Activated CD4-positive, alpha-beta T cell treated with anti-CD3 and anti-CD28 coated beads, Interleukin-2, amount 10 ng/mL, durations not matched to agents 24 days and 14 days (primary cell): ENCODE measurements at regions of chr21 and their contacts with region 1.

Region 1: DNA sequence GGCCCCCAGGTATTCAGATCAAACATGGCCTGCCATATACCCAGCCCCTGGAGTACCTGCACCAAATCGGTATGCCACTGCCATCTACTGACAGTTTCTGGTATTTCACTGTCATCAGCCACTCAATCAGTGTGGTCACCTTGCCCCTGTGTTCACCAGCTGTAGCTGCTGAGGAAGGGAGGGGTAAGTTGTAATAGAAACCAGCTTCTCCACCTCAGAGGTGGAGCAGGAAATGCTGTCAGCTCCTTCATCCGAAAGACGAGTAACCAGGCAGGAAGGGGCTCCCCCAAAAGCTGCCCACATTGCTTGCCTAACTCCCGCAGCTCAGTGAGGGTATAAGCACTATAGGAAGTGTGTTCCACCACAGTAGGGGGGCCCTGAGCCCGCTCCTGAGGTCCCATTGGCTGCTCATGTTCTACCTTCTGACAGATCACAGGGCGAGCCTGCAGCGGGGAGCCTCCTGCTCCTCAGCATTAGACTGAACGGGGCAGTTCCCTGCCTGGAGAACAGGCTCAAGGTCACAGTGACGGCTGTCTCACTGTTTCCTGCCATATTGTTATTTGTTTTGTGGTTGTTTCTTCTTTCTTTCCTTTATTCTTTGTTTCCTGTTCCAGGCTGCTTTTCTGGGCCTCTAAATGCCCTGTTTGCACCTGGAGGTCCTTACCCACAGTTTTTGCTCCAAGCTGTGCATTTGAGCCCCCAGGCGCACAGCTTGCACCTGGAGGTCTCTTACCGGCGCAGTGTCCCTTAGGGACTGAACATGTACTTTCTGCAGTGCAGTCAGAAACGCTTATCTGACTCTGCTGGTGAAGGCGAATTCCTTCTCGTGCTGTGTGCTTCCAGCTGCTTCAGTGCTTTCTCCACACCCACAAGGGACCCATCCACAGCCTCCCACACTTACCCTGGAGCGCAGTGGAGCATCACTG is 1638.3 kb downstream of the MRPL39 start:
- DNase-seq: peak; percentile 96
- H3K4me3 Mint-ChIP-seq: peak overlapping the region; percentile 67
- H3K27ac Mint-ChIP-seq: peak overlapping the region; percentile 83
- H3K4me1 Mint-ChIP-seq: peaks cover 13% of the 10 kb centered on the region
- H3K27me3 Mint-ChIP-seq: peaks cover 15% of the 10 kb centered on the region

Region 2: GRCh38 chr21:23936224-23936623 is 32.8 kb before region 1 on chr21:
- intact Hi-C with region 1: loop called (anchors 1 kb)
- DNase-seq: no peak
- H3K4me3 Mint-ChIP-seq: no peak overlapping the region
- H3K27ac Mint-ChIP-seq: no peak overlapping the region
- H3K4me1 Mint-ChIP-seq: no peaks in the 10 kb centered on the region
- H3K27me3 Mint-ChIP-seq: peaks cover 3% of the 10 kb centered on the region